ENCODE measurements at regions of chr5 and their contacts with region 1.

Region 1: GRCh38 chr5:139774980-139775661 is 20.5 kb upstream of the PSD2 start:
- DNase-seq: peak; percentile 74

Region 2: GRCh38 chr5:139392678-139393496 is 382.2 kb before region 1 on chr5:
- in situ Hi-C with region 1: no loop called
- DNase-seq: no peak

Region 3: DNA sequence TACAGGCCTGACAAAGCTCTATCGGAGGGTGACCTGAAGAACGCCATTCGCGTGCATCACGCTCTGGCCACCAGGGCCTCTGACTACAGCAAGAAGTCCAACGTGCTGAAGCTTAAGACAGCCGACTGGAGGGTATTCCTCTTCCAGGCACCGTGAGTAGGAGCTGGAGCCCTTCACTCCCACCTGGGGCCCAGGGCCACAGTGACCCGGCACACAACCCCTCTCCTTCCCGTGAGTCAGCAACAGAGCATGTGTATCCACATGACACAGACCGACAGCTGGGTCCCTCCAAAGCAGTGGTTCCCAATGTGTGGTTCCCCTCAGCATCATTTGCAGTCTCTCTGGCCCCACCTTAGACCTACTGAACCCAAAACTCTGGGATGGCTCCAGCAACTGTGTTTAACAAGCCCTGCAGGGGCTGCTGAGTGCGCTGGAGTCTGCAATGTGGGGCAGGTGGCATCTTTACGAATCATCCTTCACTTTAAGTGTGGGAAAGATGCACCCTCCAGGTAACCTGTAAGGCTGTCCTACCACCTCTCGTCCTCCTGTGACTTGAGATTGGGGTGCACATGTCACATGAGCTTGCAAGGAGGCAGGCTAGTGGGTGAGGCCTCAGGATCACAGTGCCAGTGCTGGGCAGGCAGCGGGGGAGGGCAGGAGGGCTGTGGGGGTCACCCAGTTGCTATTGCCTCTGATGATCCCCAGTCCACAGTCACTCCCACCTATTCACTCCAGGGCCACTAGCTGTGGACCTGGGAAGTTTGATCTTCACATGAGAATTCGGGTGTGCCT is 62.7 kb after region 1 on chr5:
- in situ Hi-C with region 1: loop called (anchors 5 kb)
- DNase-seq: no peak

Measured in G401 (cell line).